ENCODE measurements at regions of chr2 and their contacts with region 1.

Region 1: DNA sequence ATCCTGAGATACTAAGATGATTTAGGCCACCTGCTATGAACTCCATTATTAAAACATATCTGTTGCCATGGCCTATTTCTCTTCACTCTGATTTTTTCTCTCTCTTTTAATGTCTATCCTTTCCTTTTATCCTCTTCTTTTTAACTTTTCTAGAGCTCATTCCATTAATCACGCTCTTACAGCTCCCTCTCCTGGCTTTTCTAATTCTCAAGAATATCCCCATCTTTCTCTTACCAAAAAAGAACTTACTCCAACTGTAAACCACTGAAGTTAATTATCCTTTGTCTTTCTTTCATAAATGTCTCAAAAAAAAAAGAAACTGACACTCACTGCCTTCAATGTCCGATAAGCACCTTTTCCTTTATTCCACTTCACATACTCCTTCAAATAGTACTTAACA is 7.9 kb downstream of the PPP3R1 start:
- DNase-seq: no peak
- ATAC-seq: no peak
- H3K4me3 ChIP-seq: no peak overlapping the region
- H3K27ac ChIP-seq: no peak overlapping the region
- H3K4me1 ChIP-seq: peaks cover 61% of the 10 kb centered on the region
- H3K27me3 ChIP-seq: no peaks in the 10 kb centered on the region
- CTCF ChIP-seq: no peak

Region 2: DNA sequence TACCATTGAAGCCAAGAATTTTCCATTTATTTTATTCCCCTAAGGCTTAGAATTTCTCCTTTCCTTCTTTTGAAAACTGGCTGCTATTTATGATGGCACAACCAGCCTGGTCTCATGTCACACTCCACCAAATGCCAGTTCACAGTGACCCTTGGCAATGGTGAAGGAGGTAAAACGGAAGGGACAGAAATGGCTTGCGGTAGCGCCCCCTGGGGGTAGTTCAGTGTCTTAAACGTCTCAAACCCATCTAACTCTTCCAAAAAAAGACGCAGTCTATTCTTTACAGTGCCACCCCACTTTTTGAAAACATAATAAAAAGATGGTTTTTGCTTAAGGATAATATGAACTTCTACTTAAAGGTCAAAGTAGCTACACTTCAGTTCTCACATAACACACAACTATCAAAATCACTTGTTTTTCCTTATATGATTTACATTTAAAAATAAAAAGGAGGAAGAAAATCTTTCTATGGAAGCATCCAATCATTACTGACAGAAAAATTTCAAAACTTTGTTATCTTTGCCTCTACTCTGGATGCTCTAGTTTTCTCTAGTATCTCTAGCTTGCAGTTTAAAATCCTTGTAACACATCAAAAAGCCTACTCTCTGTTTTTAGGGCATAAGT is 58.8 kb before region 1 on chr2:
- intact Hi-C with region 1: loop called (anchors 10 kb)
- DNase-seq: peak; percentile 67
- ATAC-seq: peak; percentile 84
- H3K4me3 ChIP-seq: no peak overlapping the region
- H3K27ac ChIP-seq: no peak overlapping the region
- H3K4me1 ChIP-seq: peaks cover 11% of the 10 kb centered on the region
- H3K27me3 ChIP-seq: no peaks in the 10 kb centered on the region
- CTCF ChIP-seq: peak; percentile 62

Region 3: DNA sequence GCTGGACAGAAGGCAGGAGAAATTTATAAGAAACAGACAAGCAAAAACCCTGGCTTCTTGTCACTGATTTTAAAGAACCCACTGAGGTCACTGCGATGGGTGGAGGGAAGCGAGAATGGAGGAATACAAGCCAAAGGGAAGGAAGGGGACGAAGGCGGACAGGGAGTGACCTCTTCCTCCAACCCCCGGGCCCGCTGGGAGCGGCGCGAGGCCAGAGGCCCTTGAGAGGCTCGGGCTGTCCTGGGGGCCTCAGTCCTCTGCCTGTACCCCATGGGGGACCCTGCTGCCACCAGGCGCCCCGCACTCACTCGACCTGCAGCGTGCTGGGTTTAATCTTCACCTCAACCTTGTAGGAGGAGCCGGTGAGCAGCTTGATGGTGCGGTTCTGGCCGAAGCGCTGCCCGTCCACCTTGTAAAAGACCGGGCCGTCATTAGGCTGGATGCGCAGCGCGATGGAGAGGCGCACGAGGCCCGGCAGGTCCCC is 74.5 kb after region 1 on chr2:
- intact Hi-C with region 1: no loop called
- DNase-seq: no peak
- ATAC-seq: peak; percentile 62
- H3K4me3 ChIP-seq: peak overlapping the region; percentile 79
- H3K27ac ChIP-seq: peak overlapping the region; percentile 93
- H3K4me1 ChIP-seq: peaks cover 10% of the 10 kb centered on the region
- H3K27me3 ChIP-seq: peaks cover 7% of the 10 kb centered on the region
- CTCF ChIP-seq: no peak

Region 4: GRCh38 chr2:68762665-68763064 is 518.2 kb after region 1 on chr2:
- intact Hi-C with region 1: no loop called
- DNase-seq: no peak
- ATAC-seq: no peak
- H3K4me3 ChIP-seq: no peak overlapping the region
- H3K27ac ChIP-seq: peak overlapping the region; percentile 55
- H3K4me1 ChIP-seq: peaks cover 53% of the 10 kb centered on the region
- H3K27me3 ChIP-seq: no peaks in the 10 kb centered on the region
- CTCF ChIP-seq: no peak